Activated T-helper 1 cell treated with anti-CD3 and anti-CD28 coated beads, Interleukin-12 subunit alpha, Interleukin-12 subunit beta, Interleukin-2, Interleukin-4 antibody, amounts not matched to agents 30 ng/mL and 10 ng/mL and 1 ng/mL, durations not matched to agents 14 hours and 24 hours and 36 hours (primary cell): ENCODE measurements at regions of chr4 and their contacts with region 1.

Region 1: DNA sequence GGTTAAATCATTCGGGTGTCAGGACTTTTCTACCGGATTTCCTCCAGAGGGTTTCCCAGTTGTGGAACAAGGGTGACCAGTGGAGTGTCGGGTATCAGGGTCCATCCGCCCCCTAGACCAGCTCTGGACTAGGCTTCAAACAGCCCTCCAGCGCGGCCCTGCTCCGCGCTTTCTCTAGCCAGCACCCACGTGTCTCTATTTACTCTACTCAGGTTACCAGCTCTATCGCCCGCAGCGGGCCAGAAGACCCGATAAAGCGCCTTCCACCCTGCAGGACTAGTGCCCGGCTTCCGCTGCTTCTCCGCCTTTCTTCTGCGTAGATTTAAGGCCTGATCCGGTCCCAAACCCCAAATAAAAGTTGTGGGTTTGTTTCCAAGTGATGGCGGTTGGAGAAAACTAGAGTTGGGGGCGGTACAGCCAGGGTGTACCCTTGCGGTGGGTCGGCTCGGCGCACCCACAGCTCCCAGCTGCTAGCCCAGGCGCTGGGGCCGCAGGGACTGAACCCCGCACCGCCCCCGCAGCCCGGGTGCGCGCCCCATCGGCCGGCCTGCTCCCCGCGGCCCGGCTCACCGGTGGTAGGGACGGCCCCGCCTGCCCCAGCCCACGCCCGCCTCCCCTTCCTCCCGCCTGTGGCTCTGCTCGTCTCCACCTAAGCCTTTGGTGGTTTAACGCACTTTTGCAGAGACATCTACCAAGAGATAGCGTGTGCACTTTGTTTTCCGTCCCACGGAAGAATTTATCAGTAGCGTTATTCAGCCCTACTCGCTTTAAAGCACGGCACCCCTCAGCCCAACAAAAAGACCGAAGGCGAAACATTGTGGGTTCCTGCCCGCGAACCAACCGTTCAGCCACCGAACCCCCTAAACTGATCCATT is 2.1 kb downstream of the LEF1 start:
- DNase-seq: peak; percentile 68
- H3K4me3 Mint-ChIP-seq: peak overlapping the region; percentile 98
- H3K27ac Mint-ChIP-seq: peak overlapping the region; percentile 98
- H3K4me1 Mint-ChIP-seq: peaks cover 68% of the 10 kb centered on the region
- H3K27me3 Mint-ChIP-seq: peaks cover 12% of the 10 kb centered on the region

Region 2: DNA sequence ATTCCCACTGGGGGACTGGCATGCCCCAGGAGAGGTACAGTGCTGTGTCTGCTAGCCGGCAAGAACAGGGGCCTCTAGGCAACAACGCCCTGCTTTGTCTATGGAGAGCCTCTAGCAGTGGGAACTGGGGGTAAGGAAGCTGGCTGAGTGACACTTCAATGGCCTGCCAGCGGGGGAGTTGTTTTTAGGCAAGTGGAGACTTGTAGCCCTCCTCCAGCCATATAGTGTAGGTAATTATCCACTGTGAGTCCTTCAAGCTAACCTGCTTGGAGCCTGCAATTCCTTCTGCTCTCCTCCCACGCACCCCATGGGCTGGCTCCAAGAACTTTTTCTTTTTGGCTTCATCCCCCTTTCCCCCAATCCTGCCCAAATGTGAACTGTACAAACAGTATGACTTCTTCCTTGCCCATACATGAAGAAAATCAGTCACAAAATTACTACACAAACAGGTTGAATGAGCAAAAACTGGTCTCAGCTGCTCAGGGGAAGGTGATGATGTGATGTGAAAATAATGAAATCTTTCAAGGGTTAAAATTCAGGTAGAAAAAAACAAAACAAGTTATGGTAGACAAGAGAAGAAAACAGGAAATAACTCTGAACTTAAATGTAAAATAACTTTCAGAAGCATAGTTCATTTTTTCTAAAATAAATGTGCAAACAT is 31.0 kb before region 1 on chr4:
- intact Hi-C with region 1: loop called (anchors 1 kb)
- DNase-seq: no peak
- H3K4me3 Mint-ChIP-seq: peak overlapping the region; percentile 56
- H3K27ac Mint-ChIP-seq: peak overlapping the region; percentile 87
- H3K4me1 Mint-ChIP-seq: peaks cover 75% of the 10 kb centered on the region
- H3K27me3 Mint-ChIP-seq: no peaks in the 10 kb centered on the region

Region 3: GRCh38 chr4:108155373-108155772 is 11.3 kb before region 1 on chr4:
- intact Hi-C with region 1: loop called (anchors 1 kb)
- DNase-seq: no peak
- H3K4me3 Mint-ChIP-seq: peak overlapping the region; percentile 72
- H3K27ac Mint-ChIP-seq: peak overlapping the region; percentile 59
- H3K4me1 Mint-ChIP-seq: peaks cover 84% of the 10 kb centered on the region
- H3K27me3 Mint-ChIP-seq: no peaks in the 10 kb centered on the region

Region 4: DNA sequence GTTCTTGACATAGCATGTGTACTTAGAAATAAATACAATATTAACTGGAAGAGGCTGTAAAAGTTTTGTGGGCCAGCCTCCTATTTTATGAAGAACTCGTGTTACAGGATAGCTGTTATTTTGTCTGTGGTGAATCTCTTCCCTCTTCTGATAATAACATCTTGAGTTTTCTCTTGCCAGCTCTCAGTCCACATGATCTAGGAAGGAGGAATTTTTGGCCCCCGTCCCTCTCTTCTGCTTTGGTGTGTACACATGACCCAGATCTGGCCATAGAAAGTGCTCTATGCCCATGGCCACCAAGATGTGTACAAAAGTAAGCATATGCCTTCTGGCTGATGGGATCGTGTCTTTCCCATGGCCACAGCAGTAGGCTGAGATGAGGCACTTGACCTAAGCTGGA is 110.0 kb after region 1 on chr4:
- intact Hi-C with region 1: no loop called
- DNase-seq: no peak
- H3K4me3 Mint-ChIP-seq: no peak overlapping the region
- H3K27ac Mint-ChIP-seq: no peak overlapping the region
- H3K4me1 Mint-ChIP-seq: no peaks in the 10 kb centered on the region
- H3K27me3 Mint-ChIP-seq: no peaks in the 10 kb centered on the region